CD8-positive, alpha-beta memory T cell (primary cell): ENCODE measurements at regions of chr22 and their contacts with region 1.

Region 1: GRCh38 chr22:29245637-29246385 is 22.0 kb downstream of the RHBDD3 start:
- DNase-seq: peak; percentile 46 to 74 (median 52)
- H3K4me3 ChIP-seq: no peak overlapping the region
- H3K4me3 Mint-ChIP-seq: no peak overlapping the region
- H3K27ac ChIP-seq: no peak overlapping the region
- H3K27ac Mint-ChIP-seq: no peak overlapping the region
- H3K4me1 ChIP-seq: no peaks in the 10 kb centered on the region
- H3K4me1 Mint-ChIP-seq: peaks cover 0 to 2% (median 0%) of the 10 kb centered on the region in 3 donors
- H3K27me3 ChIP-seq: no peaks in the 10 kb centered on the region
- H3K27me3 Mint-ChIP-seq: peaks cover 14 to 25% of the 10 kb centered on the region in 2 donors

Region 2: DNA sequence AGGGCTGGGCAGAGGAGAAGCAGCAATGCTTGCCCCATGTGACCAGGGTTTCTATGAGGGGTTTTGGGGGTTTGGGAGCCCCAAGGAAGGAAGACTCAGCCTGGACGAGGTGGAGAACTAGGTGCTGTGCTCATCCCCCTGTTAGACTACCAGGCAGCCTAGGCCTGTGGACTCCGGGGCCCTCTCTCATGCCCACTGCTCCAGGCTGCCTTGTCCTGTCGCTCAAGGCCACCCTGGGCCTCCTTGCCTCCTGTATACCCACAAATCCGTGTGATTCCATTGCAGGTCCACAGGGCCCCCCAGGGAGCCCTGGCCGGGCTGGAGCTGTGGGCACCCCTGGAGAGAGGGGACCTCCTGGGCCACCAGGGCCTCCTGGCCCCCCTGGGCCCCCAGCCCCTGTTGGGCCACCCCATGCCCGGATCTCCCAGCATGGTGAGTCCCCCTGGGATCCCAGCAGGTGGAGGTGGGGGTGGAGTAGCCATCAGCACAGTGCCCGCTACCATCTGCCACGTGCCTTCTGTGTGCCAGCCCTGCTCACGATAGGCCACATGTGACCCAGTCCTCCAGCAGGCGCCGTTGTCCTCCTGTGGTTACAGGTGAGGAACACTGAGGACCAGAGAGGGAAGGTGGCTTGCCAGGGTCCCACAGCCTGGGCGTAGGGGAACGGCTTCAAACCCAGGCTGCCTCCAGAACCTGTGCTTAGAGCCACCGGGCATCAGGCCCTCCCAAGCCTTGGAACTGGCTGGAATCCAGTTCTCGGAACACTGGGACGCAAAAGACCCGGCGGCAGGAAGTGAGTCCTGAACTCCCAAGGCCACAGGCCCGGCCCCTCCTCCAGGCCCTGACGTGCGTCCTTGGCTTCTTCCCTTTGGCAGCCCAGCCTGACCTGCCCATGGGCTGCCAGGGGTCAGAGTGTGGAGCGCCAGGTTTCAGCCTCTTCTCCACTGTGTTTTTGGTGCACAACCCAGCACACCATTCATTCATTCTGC is 13.5 kb before region 1 on chr22:
- CTCF ChIA-PET with region 1: interaction called, 19 read pairs
- POLR2A ChIA-PET with region 1: no interaction called
- DNase-seq: no peak
- H3K4me3 ChIP-seq: no peak overlapping the region
- H3K4me3 Mint-ChIP-seq: no peak overlapping the region
- H3K27ac ChIP-seq: no peak overlapping the region
- H3K27ac Mint-ChIP-seq: no peak overlapping the region
- H3K4me1 ChIP-seq: no peaks in the 10 kb centered on the region
- H3K4me1 Mint-ChIP-seq: no peaks in the 10 kb centered on the region
- H3K27me3 ChIP-seq: no peaks in the 10 kb centered on the region
- H3K27me3 Mint-ChIP-seq: peaks cover 0 to 3% of the 10 kb centered on the region in 2 donors